ENCODE measurements at regions of chr6 and their contacts with region 1.

Region 1: GRCh38 chr6:251920-252319 is 40.4 kb upstream of the DUSP22 start:
- DNase-seq: peak; percentile 61
- H3K4me3 Mint-ChIP-seq: peak overlapping the region; percentile 46
- H3K27ac Mint-ChIP-seq: peak overlapping the region; percentile 80
- H3K4me1 Mint-ChIP-seq: peaks cover 29% of the 10 kb centered on the region
- H3K27me3 Mint-ChIP-seq: no peaks in the 10 kb centered on the region

Region 2: DNA sequence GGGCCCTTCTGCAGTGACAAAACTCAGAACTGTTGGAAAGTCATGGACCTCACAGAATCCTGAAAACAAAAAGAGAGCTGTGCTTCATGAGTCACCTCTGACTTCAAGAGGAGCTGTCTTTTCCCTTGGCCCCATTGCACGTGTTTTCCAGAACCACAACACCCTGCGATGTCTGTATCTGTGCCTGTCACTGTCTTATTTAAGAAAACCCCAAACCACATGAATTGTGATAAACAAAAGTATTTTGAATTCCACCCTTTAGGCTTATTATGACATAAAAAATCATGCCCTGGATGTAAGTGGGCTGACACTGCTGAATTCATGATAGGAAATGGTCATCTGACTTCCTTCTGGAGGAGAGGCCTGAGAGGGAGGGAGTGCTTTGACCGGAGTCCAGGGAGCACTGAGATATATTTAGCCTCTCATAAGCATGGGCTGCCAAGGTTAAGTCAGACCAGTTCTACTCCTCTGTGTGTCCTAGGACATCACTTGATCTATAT is 56.0 kb before region 1 on chr6:
- intact Hi-C with region 1: loop called (anchors 1 kb)
- DNase-seq: peak; percentile 85
- H3K4me3 Mint-ChIP-seq: peak overlapping the region; percentile 21
- H3K27ac Mint-ChIP-seq: peak overlapping the region; percentile 74
- H3K4me1 Mint-ChIP-seq: peaks cover 44% of the 10 kb centered on the region
- H3K27me3 Mint-ChIP-seq: peaks cover 2% of the 10 kb centered on the region

Region 3: DNA sequence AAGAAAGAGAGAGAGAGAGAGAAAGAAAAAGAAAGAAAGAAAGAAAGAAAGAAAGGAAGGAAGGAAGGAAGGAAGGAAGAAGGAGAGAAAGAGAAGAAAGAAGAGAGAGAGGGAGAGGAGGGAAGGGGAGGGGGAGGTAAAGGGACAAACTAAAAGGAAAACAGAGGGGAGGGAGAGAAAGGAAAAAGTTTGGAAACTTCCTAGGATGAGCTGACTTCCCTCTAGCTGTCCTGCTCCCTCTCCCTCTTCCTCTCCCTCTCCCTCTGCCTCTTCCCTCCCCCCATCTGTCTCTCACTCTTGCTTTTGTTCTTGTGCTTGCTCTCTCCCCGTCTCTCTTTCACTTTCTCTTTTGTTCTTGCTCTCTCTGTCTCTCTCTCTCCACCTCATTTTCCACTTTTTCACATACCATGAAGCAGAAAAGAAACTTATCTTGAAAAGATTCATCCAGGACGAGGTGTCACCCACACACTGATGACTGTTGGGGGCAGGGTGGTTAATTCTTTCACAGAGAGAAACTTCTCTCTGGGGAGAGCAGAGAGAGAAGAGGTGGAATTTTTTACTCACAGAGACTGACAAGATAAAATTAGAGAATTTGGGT is 16.1 kb before region 1 on chr6:
- intact Hi-C with region 1: loop called (anchors 1 kb)
- DNase-seq: peak; percentile 87
- H3K4me3 Mint-ChIP-seq: peak overlapping the region; percentile 74
- H3K27ac Mint-ChIP-seq: peak overlapping the region; percentile 85
- H3K4me1 Mint-ChIP-seq: peaks cover 47% of the 10 kb centered on the region
- H3K27me3 Mint-ChIP-seq: no peaks in the 10 kb centered on the region

Region 4: DNA sequence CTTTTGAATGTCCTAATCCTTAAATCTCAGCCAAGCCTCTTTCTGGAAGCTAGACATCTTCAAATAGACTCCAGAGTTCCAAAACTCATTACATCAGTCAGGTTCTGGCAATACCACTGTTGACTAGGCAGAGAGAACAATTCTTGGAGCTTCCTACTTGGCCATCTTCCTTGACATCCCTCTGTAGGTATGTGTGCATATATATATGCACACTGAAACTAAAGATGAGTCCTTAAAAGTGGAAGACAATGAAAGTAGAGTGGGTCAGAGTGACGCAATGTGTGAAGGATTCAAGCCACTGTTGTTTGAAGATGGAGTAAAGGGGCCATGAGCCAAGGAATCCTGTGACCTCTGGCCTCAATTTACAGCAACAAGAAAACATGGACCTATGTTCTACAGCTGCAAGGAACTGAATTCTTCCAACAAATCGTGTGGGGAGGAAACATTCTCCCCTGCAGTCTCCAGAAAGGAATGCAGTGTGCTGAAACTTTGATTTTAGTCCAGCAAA is 21.7 kb after region 1 on chr6:
- intact Hi-C with region 1: loop called (anchors 2 kb)
- DNase-seq: peak; percentile 38
- H3K4me3 Mint-ChIP-seq: no peak overlapping the region
- H3K27ac Mint-ChIP-seq: no peak overlapping the region
- H3K4me1 Mint-ChIP-seq: peaks cover 15% of the 10 kb centered on the region
- H3K27me3 Mint-ChIP-seq: peaks cover 11% of the 10 kb centered on the region

Region 5: GRCh38 chr6:336159-337019 is 84.5 kb after region 1 on chr6:
- intact Hi-C with region 1: loop called (anchors 1 kb)
- DNase-seq: peak; percentile 71
- H3K4me3 Mint-ChIP-seq: peak overlapping the region; percentile 65
- H3K27ac Mint-ChIP-seq: peak overlapping the region; percentile 75
- H3K4me1 Mint-ChIP-seq: peaks cover 45% of the 10 kb centered on the region
- H3K27me3 Mint-ChIP-seq: no peaks in the 10 kb centered on the region

Region 6: DNA sequence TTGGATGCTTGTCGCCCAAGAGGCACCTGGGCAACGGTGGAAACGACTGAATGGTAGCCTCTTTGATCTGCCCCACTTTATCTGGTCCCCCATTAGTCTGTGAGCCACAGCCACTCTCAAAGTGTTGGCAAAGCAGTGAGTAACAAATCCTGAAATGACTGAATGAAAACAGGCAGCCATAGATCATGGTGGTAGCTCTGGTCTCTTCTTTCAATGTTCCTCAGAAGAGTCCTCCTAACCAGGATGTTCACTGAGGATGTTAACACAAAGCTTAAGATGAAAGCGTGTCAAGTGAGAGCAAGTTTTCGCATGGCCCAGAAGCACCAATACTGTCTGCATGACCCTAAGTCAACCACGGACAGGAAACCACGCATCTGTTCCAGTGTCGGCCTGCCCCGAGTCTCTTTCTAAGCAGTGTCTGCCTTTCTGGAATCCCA is 246.9 kb after region 1 on chr6:
- intact Hi-C with region 1: no loop called
- DNase-seq: peak; percentile 88
- H3K4me3 Mint-ChIP-seq: peak overlapping the region; percentile 78
- H3K27ac Mint-ChIP-seq: peak overlapping the region; percentile 92
- H3K4me1 Mint-ChIP-seq: peaks cover 73% of the 10 kb centered on the region
- H3K27me3 Mint-ChIP-seq: no peaks in the 10 kb centered on the region